Activated naive CD4-positive, alpha-beta T cell treated with anti-CD3 and anti-CD28 coated beads for 36 hours (primary cell): ENCODE measurements at regions of chr12 and their contacts with region 1.

Region 1: DNA sequence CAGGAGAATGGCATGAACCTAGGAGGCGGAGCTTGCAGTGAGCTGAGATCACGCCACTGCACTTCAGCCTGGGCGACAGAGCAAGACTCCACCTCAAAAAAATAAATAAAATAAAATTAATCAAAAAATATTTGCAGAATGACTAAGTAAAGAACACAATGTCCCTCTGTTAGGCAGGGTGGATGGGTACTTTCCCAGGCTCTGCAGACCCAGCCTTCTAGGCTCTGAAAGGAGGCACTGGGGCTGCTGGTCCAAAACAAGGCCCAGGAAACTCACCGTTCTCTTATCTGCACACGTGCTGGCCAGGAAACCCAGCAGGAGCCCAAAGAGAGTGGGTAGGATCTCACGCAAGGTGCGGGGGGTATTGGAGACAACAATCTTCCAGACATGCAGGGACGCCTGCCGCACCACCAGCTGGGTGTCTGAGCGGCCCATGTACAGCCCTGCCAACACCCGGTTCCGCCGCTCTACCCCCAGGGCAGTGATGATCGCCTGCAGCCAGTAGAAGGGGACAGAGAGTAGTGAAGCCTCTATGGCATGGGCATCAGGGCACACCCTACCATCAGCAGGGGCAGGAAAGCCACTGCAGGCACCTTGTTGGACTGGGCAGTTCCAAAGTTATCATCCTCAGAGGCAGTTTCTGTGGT is 25.8 kb upstream of the RAB35 start:
- DNase-seq: no peak
- H3K4me3 Mint-ChIP-seq: no peak overlapping the region
- H3K27ac Mint-ChIP-seq: no peak overlapping the region
- H3K4me1 Mint-ChIP-seq: no peaks in the 10 kb centered on the region
- H3K27me3 Mint-ChIP-seq: no peaks in the 10 kb centered on the region

Region 2: GRCh38 chr12:120175062-120175461 is 32.7 kb after region 1 on chr12:
- CTCF ChIA-PET with region 1: interaction called, 3 read pairs
- intact Hi-C with region 1: loop called (anchors 5 kb)
- DNase-seq: no peak
- H3K4me3 Mint-ChIP-seq: no peak overlapping the region
- H3K27ac Mint-ChIP-seq: no peak overlapping the region
- H3K4me1 Mint-ChIP-seq: no peaks in the 10 kb centered on the region
- H3K27me3 Mint-ChIP-seq: no peaks in the 10 kb centered on the region